ENCODE measurements at regions of chr13 and their contacts with region 1.

Region 1: GRCh38 chr13:24299488-24300114 is 9.8 kb upstream of the C1QTNF9 start:
- DNase-seq: no peak
- H3K4me3 ChIP-seq: no peak overlapping the region
- CTCF ChIP-seq: no peak
- POLR2A ChIP-seq: no peak

Region 2: GRCh38 chr13:24339937-24340607 is 40.5 kb after region 1 on chr13:
- intact Hi-C with region 1: loop called (anchors 2 kb)
- DNase-seq: no peak
- H3K4me3 ChIP-seq: no peak overlapping the region
- CTCF ChIP-seq: no peak
- POLR2A ChIP-seq: no peak